ENCODE measurements at regions of chr15 and their contacts with region 1.

Region 1: GRCh38 chr15:56739964-56740640 is 6.8 kb upstream of the ZNF280D start:
- DNase-seq: peak in 2 of 9 experiments; percentile 12 to 40
- ATAC-seq: no peak
- H3K4me3 ChIP-seq: no peak overlapping the region
- H3K4me3 Mint-ChIP-seq: no peak overlapping the region
- H3K27ac ChIP-seq: no peak overlapping the region
- H3K27ac Mint-ChIP-seq: no peak overlapping the region
- H3K4me1 ChIP-seq: no peaks in the 10 kb centered on the region
- H3K4me1 Mint-ChIP-seq: no peaks in the 10 kb centered on the region
- H3K27me3 ChIP-seq: no peaks in the 10 kb centered on the region
- H3K27me3 Mint-ChIP-seq: peaks cover 6% of the 10 kb centered on the region
- CTCF ChIP-seq: no peak

Region 2: GRCh38 chr15:56877255-56877970 is 137.3 kb after region 1 on chr15:
- CTCF ChIA-PET with region 1: no interaction called
- POLR2A ChIA-PET with region 1: no interaction called
- intact Hi-C with region 1: loop called in 1 of 2 experiments (anchors 5 kb)
- DNase-seq: peak in 1 of 9 experiments; percentile 18
- ATAC-seq: no peak
- H3K4me3 ChIP-seq: no peak overlapping the region
- H3K4me3 Mint-ChIP-seq: no peak overlapping the region
- H3K27ac ChIP-seq: no peak overlapping the region
- H3K27ac Mint-ChIP-seq: no peak overlapping the region
- H3K4me1 ChIP-seq: no peaks in the 10 kb centered on the region
- H3K4me1 Mint-ChIP-seq: no peaks in the 10 kb centered on the region
- H3K27me3 ChIP-seq: no peaks in the 10 kb centered on the region
- H3K27me3 Mint-ChIP-seq: no peaks in the 10 kb centered on the region
- CTCF ChIP-seq: no peak

Measured in CD8-positive, alpha-beta T cell (primary cell).